Dorsolateral prefrontal cortex (tissue), 120 donors: ENCODE measurements at regions of chr11 and their contacts with region 1.

Region 1: DNA sequence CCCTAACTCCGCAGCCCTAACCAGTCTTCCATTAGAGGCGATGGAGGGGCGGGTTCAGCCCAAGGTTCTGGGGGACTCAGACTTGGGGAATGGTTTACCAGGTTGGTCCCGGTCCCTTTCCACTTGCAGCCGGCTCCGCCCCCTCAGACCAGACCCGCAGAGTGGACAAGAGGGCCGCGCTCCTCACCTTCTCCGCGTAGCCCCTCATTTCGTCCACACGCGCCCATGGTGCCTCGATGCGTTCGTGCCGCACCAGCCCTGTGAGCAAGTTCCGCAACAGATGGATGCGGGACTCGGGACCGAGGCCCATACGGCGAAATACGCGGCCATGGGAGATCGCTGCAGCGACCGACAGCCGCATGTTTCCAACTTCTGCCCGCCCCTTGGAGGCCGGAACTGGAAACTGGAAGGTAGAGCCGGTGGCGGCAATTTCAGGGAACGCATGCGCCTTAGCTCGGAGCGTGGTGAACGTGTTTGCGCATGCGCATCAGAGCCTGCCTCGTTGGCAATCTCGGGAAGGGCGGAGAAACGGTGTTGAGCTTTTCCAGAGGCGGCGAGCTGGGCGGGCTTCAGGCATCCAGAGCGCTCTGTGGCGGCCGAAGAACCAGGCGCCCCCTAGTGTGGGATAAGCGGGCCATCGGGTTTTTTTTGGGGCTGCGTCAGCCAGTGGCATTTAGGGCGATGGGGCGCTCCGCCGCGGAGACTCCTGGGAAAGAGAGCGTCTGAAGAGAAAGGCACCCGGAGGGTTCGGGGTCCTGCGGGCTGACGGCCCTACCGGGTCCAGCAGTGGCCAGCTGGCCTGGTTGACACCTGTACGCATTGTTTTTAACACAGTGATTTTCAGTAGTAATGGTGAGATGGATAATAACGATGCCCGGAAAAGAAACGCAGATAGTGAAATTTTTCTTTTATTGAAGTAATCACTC is at the start of gene MRPL17:
- DNase-seq: peak; percentile 94 to 98 (median 96)
- H3K4me3 ChIP-seq: peak within 1 kb of the TSS; percentile 65 to 100 (median 89)
- H3K27ac ChIP-seq: peak within 1 kb of the TSS; percentile 83 to 99 (median 96)
- H3K27me3 ChIP-seq: no peaks in the 10 kb centered on the region
- CTCF ChIP-seq: peak; percentile 88 to 100 (median 97)
- total RNA-seq, gene MRPL17: 17.2 to 43.4 (median 26.1) TPM

Region 2: GRCh38 chr11:6531267-6531752 is 151.9 kb before region 1 on chr11:
- intact Hi-C with region 1: loop called (anchors 1 to 2 kb)
- DNase-seq: peak in 1 of 10 donors; percentile 28
- H3K4me3 ChIP-seq: no peak overlapping the region
- H3K27ac ChIP-seq: peak overlapping the region in 4 of 59 donors; percentile 5 to 44 (median 18)
- H3K27me3 ChIP-seq: no peaks in the 10 kb centered on the region
- CTCF ChIP-seq: peak; percentile 59 to 91 (median 78)

Region 3: GRCh38 chr11:6612213-6613041 is 70.8 kb before region 1 on chr11 and contains the start of gene TAF10:
- intact Hi-C with region 1: loop called in 1 of 2 experiments (anchors 2 kb)
- DNase-seq: peak; percentile 94 to 98 (median 97)
- H3K4me3 ChIP-seq: peak within 1 kb of the TSS; percentile 59 to 89 (median 79)
- H3K27ac ChIP-seq: peak within 1 kb of the TSS; percentile 85 to 100 (median 99)
- H3K27me3 ChIP-seq: no peaks in the 10 kb centered on the region
- CTCF ChIP-seq: peak in 33 of 56 donors; percentile 5 to 45 (median 23)
- total RNA-seq, gene TAF10: 45.6 to 116 (median 75.0) TPM

Region 4: DNA sequence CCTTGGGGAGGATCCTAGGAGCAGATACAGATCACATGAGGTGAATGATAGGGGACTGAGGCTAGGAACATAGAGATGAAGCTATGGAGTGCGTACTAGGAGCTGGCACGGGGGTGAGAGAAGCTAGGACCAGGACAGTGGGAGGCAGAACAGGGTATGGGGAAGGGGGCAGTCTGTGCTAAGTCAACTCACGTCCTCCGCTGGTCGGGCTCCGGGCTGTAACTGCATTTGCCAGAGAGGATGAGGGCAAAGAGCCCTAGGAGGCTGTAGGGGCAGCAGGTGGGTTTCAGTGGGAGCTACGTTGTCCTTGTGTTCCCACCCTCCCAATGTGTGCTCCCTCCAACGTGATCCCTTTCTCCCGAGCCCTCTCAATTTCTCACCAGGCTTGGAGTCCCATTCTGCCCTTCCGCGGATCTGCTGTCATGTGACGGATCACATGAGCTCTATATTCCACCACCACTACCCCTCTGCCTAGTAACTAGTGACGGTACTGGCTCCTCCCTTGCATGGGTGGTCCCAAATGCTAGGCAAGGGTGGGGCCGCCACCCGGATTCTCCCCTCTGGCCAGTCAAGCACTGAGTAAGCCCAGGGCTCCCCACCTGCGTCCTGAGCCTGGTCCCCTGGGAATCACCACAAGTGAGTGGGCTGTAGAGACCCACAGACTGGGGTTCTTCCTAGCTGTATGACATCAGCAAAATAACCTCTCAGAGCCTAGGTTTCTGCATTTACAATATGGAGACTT is 64.0 kb before region 1 on chr11 and contains the start of gene TPP1:
- intact Hi-C with region 1: loop called in 1 of 2 experiments (anchors 2 kb)
- DNase-seq: peak; percentile 83 to 99 (median 97)
- H3K4me3 ChIP-seq: peak within 1 kb of the TSS; percentile 52 to 98 (median 85)
- H3K27ac ChIP-seq: peak within 1 kb of the TSS; percentile 76 to 99 (median 94)
- H3K27me3 ChIP-seq: no peaks in the 10 kb centered on the region
- CTCF ChIP-seq: peak in 17 of 56 donors; percentile 1 to 43 (median 15)
- total RNA-seq, gene TPP1: 89.6 to 219 (median 142) TPM

Region 5: DNA sequence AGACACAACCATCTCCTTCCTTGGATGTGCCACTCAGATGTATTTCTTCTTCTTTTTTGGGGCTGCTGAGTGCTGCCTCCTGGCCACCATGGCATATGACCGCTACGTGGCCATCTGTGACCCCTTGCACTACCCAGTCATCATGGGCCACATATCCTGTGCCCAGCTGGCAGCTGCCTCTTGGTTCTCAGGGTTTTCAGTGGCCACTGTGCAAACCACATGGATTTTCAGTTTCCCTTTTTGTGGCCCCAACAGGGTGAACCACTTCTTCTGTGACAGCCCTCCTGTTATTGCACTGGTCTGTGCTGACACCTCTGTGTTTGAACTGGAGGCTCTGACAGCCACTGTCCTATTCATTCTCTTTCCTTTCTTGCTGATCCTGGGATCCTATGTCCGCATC is 193.7 kb after region 1 on chr11:
- intact Hi-C with region 1: no loop called
- DNase-seq: no peak
- H3K4me3 ChIP-seq: no peak overlapping the region
- H3K27ac ChIP-seq: no peak overlapping the region
- H3K27me3 ChIP-seq: peaks cover 0 to 4% (median 0%) of the 10 kb centered on the region in 45 donors
- CTCF ChIP-seq: no peak

Region 6: GRCh38 chr11:6895010-6895409 is 211.8 kb after region 1 on chr11:
- intact Hi-C with region 1: no loop called
- DNase-seq: no peak
- H3K4me3 ChIP-seq: no peak overlapping the region
- H3K27ac ChIP-seq: no peak overlapping the region
- H3K27me3 ChIP-seq: peaks cover 0 to 3% (median 0%) of the 10 kb centered on the region in 45 donors
- CTCF ChIP-seq: no peak